ENCODE measurements at regions of chr6 and their contacts with region 1.

Region 1: GRCh38 chr6:16332175-16332542 is 93.8 kb downstream of the GMPR start:
- DNase-seq: peak; percentile 64 to 75
- ATAC-seq: peak; percentile 63 to 65
- H3K4me3 ChIP-seq: no peak overlapping the region
- H3K27ac ChIP-seq: peak overlapping the region; percentile 69 to 76 (median 72)
- H3K4me1 ChIP-seq: peaks cover 57 to 67% of the 10 kb centered on the region in 2 donors
- H3K27me3 ChIP-seq: no peaks in the 10 kb centered on the region
- CTCF ChIP-seq: peak; percentile 90 to 95 (median 92)
- POLR2A ChIP-seq: no peak

Region 2: DNA sequence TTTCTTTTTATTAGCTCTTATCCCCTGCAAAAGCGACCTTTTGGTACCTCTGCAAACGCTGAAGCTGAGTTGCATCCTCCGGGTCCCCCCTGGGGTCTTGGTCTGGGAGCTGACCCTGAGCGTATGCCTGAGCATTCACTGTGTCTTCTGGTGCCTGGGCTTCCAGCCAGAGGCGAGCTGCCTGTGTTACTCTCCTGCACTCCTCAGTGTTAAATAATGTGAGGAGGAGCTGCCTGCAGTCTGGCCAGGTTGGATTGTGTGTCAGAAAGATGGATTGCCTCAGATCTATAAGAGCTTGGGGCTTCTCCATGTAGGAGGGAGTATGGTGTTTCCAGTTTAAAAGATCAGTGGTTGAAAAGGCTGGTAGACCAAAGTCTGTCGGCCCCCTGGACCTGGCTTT is 102.5 kb before region 1 on chr6:
- in situ Hi-C with region 1: loop called in 2 of 4 experiments (anchors 5 to 10 kb)
- intact Hi-C with region 1: loop called (anchors 2 kb)
- DNase-seq: no peak
- ATAC-seq: peak in 1 of 2 donors; percentile 6
- H3K4me3 ChIP-seq: no peak overlapping the region
- H3K27ac ChIP-seq: peak overlapping the region in 1 of 4 donors; percentile 25
- H3K4me1 ChIP-seq: peaks cover 8 to 14% of the 10 kb centered on the region in 2 donors
- H3K27me3 ChIP-seq: no peaks in the 10 kb centered on the region
- CTCF ChIP-seq: no peak
- POLR2A ChIP-seq: no peak

Region 3: DNA sequence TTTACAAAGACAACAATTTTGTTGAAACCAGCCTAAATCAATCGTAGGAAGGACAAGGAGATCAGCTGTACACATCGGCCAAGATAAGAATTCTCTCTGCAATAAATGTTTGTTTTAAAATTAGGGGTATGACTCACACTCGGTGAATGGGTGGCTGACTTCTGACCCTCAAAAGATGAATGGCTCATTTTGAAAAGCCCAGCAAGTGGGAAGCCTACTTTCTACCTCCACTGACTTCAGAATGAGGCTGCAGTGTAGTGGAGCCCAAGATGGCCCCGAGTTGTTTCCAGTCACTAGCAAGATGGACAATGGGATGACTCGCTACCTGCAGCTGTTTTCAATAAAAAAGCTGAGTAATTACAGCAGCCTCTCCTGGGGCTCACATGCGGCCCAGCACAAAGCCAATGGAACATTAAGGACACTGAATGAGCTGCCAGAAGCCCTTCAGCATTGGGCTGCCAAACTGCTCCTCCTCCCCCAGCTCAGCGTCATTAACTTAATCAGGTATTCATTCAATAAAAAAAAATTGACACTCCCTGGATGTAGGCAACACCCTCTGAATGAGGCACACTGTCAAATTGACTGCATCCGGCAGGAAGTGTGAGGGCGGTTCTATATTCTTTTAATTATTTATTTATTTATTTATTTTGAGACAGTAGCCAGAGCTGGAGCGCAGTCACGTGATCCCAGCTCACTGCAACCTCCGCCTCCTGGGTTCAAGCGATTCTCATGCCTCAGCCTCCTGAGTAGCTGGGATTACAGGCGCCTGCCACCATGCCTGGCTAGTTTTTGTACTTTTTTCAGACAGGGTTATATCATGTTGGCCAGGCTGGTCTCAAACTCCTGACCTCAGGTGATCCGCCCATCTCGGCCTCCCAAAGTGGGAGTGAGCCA is 13.5 kb after region 1 on chr6:
- in situ Hi-C with region 1: no loop called
- intact Hi-C with region 1: loop called (anchors 1 kb)
- DNase-seq: no peak
- ATAC-seq: peak; percentile 56 to 63
- H3K4me3 ChIP-seq: no peak overlapping the region
- H3K27ac ChIP-seq: peak overlapping the region; percentile 9 to 44 (median 34)
- H3K4me1 ChIP-seq: peaks cover 17 to 23% of the 10 kb centered on the region in 2 donors
- H3K27me3 ChIP-seq: no peaks in the 10 kb centered on the region
- CTCF ChIP-seq: no peak
- POLR2A ChIP-seq: no peak

Region 4: DNA sequence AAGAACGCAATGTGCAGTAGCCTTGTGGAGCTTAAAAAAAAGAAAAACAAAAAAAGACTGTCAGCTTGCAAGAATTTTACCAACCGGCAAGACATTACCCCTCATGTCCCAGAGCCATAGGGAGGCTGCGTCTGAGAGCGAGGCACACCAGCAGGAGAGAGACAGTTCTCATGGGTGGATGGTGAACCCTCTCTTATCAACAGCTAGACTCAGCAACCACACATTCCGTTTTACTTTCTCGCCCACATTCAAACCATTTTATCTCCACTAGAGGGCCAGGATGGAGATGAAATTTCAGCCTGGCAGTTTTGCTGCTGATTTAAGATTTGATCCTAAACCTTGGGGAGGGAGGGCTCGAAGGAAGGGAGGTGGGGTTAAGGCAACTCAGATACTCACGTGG is 182.1 kb after region 1 on chr6:
- in situ Hi-C with region 1: no loop called
- intact Hi-C with region 1: loop called (anchors 2 kb)
- DNase-seq: no peak
- ATAC-seq: peak in 1 of 2 donors; percentile 58
- H3K4me3 ChIP-seq: no peak overlapping the region
- H3K27ac ChIP-seq: no peak overlapping the region
- H3K4me1 ChIP-seq: peaks cover 37% of the 10 kb centered on the region in 2 donors
- H3K27me3 ChIP-seq: no peaks in the 10 kb centered on the region
- CTCF ChIP-seq: peak; percentile 33 to 50 (median 36)
- POLR2A ChIP-seq: no peak

Region 5: GRCh38 chr6:16770701-16771569 is 438.8 kb after region 1 on chr6:
- in situ Hi-C with region 1: loop called (anchors 5 to 10 kb)
- intact Hi-C with region 1: no loop called
- DNase-seq: peak; percentile 79 to 81
- ATAC-seq: peak; percentile 60 to 69
- H3K4me3 ChIP-seq: no peak overlapping the region
- H3K27ac ChIP-seq: peak overlapping the region; percentile 40 to 47 (median 44)
- H3K4me1 ChIP-seq: peaks cover 27 to 28% of the 10 kb centered on the region in 2 donors
- H3K27me3 ChIP-seq: no peaks in the 10 kb centered on the region
- CTCF ChIP-seq: peak; percentile 91 to 96 (median 94)
- POLR2A ChIP-seq: no peak

Measured in gastrocnemius medialis (tissue), 4 donors.